Common myeloid progenitor, CD34-positive (primary cell): ENCODE measurements at regions of chr11 and their contacts with region 1.

Region 1: DNA sequence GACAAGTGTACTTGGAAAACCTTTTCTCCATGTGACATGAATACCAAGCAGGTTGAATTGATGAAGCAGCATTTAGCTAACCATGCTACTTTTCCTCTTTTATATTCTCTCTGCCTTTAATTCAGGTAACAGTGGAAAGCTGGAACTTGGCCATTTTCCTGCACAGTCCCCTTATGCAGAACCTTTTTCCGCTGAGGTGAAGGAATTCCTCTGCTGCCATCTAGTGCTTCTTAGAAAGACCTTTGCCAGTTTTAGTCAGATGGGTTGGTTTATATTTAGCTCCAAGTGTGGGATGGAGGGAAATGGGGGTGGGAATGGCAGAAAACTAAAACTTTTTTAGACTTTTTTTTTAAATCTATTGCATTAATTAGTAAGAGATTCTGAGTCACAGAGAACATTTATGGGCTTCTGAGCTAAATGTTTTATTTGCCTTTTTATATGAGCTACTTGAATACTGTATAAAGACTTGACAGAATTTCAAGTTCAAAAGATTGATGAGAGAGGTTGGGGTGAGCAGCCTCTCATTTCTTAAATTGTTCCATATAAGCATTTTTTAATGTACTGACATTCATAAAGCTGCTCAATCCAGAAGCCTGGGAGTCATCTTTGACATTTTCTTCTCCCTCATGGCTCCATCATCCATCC is 153.9 kb upstream of the ZC3H12C start:
- DNase-seq: peak; percentile 60 to 72 (median 69)
- H3K4me3 ChIP-seq: no peak overlapping the region
- H3K27ac ChIP-seq: no peak overlapping the region
- H3K4me1 ChIP-seq: no peaks in the 10 kb centered on the region
- H3K27me3 ChIP-seq: no peaks in the 10 kb centered on the region

Region 2: DNA sequence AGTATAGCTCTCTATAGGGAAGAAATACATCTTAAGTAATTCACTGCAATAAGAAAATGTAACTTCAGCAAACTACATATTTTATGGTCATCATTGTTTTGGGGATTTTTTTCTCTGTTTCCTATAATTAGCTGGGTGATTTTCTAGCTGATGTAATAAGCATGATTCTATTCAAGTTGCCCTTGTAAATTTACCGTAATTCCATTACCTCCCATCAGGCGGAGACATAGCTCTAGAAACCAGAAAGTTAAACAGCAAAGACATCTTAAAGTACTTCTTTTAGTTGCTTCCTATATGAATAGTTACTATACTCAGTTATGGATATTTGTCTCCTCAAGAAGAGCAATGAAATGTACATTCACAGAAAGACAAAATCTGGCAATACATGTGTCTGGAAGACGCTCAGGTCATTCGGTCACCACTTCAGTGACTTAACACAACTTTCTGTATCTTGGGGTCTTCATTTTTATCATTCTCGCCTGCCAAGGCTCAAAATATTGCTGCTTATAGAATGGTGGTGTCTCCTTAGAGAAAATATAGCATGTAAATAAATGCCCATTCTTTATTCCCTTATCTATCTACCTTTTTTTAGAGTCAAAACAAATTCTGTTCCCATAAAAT is 86.0 kb before region 1 on chr11:
- CTCF ChIA-PET with region 1: interaction called, 24 read pairs
- POLR2A ChIA-PET with region 1: no interaction called
- DNase-seq: peak; percentile 72 to 88 (median 81)
- H3K4me3 ChIP-seq: no peak overlapping the region
- H3K27ac ChIP-seq: no peak overlapping the region
- H3K4me1 ChIP-seq: no peaks in the 10 kb centered on the region
- H3K27me3 ChIP-seq: no peaks in the 10 kb centered on the region